GM23248 (cell line): ENCODE measurements at regions of chr11 and their contacts with region 1.

Region 1: GRCh38 chr11:47154616-47155570 is 21.8 kb downstream of the ARFGAP2 start:
- DNase-seq: no peak
- H3K4me3 ChIP-seq: no peak overlapping the region
- H3K27ac ChIP-seq: no peak overlapping the region
- H3K4me1 ChIP-seq: peaks cover 9% of the 10 kb centered on the region
- H3K27me3 ChIP-seq: no peaks in the 10 kb centered on the region

Region 2: GRCh38 chr11:46889689-46890475 is 265.0 kb before region 1 on chr11:
- in situ Hi-C with region 1: loop called (anchors 5 kb)
- DNase-seq: peak; percentile 80
- H3K4me3 ChIP-seq: no peak overlapping the region
- H3K27ac ChIP-seq: no peak overlapping the region
- H3K4me1 ChIP-seq: no peaks in the 10 kb centered on the region
- H3K27me3 ChIP-seq: no peaks in the 10 kb centered on the region

Region 3: GRCh38 chr11:46936138-46937110 is 218.5 kb before region 1 on chr11 and contains the start of gene CSTPP1:
- in situ Hi-C with region 1: no loop called
- DNase-seq: peak; percentile 97
- H3K4me3 ChIP-seq: peak within 1 kb of the TSS; percentile 81
- H3K27ac ChIP-seq: peak within 1 kb of the TSS; percentile 37
- H3K4me1 ChIP-seq: peaks cover 4% of the 10 kb centered on the region
- H3K27me3 ChIP-seq: no peaks in the 10 kb centered on the region
- total RNA-seq, gene CSTPP1: 21.7 and 31.5 TPM in 2 replicates

Region 4: DNA sequence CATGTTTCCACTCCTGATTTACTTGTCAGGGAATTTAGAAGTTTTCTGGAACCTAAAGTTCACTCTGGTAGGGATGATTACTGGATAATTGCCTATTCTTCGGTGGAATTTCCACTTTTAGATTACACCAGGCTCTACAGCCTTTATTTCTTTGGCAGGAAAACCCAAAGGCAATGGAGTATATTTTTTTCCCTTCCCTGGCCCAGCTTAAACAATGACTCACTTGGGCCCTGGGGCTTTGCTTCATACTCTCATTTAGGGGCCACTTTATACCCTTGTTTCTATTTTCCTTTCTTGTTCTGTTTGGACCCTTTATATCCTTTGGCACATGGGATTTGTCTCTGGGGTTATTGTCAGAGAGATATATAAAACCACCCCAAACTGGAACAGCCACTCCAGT is 103.7 kb before region 1 on chr11:
- in situ Hi-C with region 1: no loop called
- DNase-seq: peak; percentile 39
- H3K4me3 ChIP-seq: no peak overlapping the region
- H3K27ac ChIP-seq: no peak overlapping the region
- H3K4me1 ChIP-seq: peaks cover 6% of the 10 kb centered on the region
- H3K27me3 ChIP-seq: no peaks in the 10 kb centered on the region

Region 5: DNA sequence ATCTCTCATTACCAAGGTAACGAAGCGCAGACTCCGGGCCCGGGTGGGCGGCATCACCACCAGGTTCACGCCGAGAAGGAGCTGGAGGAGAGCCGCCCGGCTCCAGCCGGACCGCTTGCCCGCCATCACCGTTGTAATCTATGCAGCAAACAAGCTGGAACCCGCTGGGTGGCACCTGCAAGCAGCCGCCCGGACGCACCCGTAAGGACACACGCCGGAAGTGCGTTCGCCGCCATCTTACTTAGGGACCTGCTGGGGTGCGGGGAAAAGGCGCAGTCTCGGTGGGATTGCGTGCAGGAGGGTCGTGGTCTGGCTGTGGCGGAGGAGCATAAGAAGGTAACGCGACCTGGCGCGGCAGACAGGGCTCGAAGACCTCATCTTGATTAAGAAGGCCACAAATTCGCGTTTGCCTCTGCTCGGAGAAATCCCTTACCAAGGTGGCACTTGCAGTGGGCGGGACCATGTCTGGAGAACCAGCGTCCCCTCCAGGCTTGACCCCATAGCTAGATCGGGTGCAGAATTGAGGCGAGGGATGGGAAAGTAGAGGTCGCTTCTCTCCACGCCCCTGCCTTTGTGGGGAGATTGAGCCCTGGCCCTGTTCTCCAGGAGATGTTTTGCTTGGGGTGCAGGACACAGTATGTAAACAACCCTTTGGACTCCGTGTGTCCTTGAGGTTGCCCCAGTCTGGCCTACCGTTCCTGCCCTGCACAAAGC is 93.9 kb after region 1 on chr11 and contains the start of gene ACP2:
- in situ Hi-C with region 1: no loop called
- DNase-seq: peak; percentile 96
- H3K4me3 ChIP-seq: peak within 1 kb of the TSS; percentile 99
- H3K27ac ChIP-seq: peak within 1 kb of the TSS; percentile 69
- H3K4me1 ChIP-seq: no peaks in the 10 kb centered on the region
- H3K27me3 ChIP-seq: no peaks in the 10 kb centered on the region
- total RNA-seq, gene ACP2: 48.4 and 62.6 TPM in 2 replicates